Right ventricle myocardium inferior (tissue), 1 donor: ENCODE measurements at regions of chr11 and their contacts with region 1.

Region 1: DNA sequence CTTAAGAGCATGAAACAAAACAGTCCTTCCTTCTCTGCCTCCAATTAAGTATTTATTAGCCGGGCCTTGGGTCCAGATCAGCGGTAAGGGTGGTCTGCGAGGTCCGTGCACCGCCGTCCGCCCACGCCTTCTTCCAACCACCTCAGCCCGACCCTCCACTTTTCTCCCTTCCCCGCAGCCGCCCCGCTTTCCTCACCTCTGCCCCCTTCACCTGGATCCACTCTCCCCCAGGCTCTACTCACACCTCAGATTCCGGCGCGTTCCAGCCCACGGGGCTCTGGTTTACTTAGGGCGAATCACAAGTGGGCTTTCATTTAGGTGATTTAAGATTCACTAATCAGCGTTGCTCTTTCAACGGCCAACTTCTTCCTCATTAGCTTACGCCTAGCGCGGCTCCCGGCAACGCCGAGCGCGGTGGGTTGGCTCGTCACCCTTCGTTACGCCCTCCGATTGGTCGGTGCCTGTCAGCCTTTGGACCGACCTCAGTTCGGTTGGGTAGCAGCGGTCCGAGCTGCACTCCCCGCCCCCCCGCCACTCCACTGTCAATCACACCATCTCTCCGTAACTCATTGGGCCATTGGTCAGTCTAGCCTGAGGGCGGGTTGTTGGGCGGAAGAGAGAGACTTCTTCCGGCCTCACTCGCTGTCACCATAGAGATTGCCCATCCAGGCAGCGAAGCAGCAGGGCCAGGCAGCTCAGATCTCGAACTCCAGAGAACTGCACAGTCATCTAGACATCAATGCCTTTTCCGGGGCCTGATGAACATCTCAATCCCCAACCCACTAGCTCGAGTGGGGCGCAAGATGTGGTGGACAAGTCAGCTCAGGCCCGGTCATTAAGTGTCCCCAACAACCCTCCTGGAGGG is at the start of gene TMEM218:
- DNase-seq: peak; percentile 99
- ATAC-seq: peak; percentile 100
- total RNA-seq, gene TMEM218: 6.0 TPM

Region 2: DNA sequence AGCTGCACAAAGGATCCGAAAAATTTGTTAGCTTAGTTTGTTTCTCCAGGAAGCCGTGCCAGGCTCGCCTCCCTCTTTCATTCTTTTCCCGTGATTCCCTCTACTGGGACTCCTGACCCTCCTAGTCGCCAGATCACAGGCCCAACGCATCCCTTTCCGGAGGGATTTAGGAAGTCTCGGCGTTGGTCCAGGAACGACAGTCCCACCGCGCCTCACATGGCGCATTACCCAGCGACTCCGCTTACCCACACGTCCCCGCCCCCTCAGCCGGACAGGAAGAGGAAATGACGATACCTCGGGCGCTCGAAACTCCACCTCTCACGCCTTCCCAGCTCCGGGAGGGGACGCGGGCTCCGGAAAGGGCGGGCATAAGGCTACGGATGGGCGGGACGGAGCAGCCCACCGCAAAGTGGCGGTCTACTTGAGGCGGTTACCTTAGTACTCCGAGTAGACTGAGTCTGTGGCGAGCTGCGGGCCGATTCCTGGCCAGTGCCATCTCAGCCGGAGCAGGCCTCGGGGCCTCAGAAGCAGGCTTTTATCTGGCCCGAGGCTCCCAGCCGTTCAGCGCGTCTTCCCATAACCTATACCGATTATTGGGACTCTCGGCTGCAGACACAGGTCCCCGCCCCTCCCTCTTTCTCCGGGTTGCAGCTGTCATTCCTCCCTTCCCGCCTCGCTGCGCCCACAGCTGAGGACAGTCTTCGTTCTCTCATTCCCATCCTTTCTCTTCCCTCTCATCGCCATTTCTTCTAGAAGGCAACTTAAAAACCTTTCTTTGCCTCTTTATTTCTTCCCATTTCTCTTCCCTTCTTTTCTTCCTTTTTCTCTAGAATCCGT is 157.6 kb before region 1 on chr11 and contains the start of gene CCDC15:
- intact Hi-C with region 1: loop called (anchors 5 kb)
- DNase-seq: peak; percentile 99
- ATAC-seq: peak; percentile 100
- total RNA-seq, gene CCDC15: 0.38 TPM